CD8-positive, alpha-beta T cell (primary cell): ENCODE measurements at regions of chr6 and their contacts with region 1.

Region 1: DNA sequence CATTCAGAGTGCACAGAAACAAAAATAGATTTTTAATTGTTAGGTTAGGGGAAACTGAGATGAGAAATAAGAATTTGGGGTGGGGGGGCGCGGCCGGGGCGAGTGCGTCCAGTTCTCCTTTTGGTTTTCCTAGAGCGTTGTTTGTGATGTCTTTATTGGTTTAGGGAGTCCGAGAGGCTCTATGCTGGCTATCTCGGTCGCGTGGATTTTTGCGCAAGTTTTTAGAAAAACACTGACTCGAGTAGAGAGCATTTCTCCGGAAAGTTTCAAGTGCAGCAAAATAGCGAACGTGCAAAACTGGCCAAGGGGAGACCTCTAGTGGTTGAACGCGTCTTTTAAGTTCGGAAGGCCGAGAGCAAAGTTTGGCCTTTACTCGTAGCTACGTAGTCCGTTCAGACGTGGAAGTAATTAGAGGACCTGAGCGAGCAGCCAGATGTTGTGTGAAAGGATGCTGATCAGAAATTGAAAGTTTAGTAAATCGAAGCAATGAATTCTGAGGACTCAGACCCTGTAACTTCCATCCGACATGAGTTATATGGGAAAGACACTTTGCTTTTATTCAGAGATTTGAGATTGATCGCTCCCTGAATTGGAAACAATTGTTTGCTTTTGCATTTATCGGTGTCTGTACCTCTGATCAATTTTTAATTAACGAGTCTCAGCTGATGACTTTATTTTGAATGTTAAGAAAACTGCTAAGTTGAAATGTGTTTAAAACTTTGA is 2.7 kb downstream of the L3MBTL3 start:
- DNase-seq: peak; percentile 57 to 93 (median 78)
- ATAC-seq: peak; percentile 45
- H3K4me3 ChIP-seq: peak overlapping the region; percentile 61 to 85
- H3K4me3 Mint-ChIP-seq: peak overlapping the region; percentile 98
- H3K27ac ChIP-seq: peak overlapping the region; percentile 60 to 82
- H3K27ac Mint-ChIP-seq: peak overlapping the region; percentile 96
- H3K4me1 ChIP-seq: peaks cover 11% of the 10 kb centered on the region
- H3K4me1 Mint-ChIP-seq: peaks cover 43% of the 10 kb centered on the region
- H3K27me3 ChIP-seq: no peaks in the 10 kb centered on the region
- H3K27me3 Mint-ChIP-seq: no peaks in the 10 kb centered on the region
- CTCF ChIP-seq: peak; percentile 63

Region 2: GRCh38 chr6:129672881-129673643 is 348.0 kb before region 1 on chr6:
- CTCF ChIA-PET with region 1: no interaction called
- POLR2A ChIA-PET with region 1: interaction called, 3 read pairs
- intact Hi-C with region 1: loop called (anchors 1 to 5 kb)
- DNase-seq: peak in 3 of 9 experiments; percentile 14 to 59 (median 39)
- ATAC-seq: peak; percentile 58
- H3K4me3 ChIP-seq: no peak overlapping the region
- H3K4me3 Mint-ChIP-seq: peak overlapping the region; percentile 74
- H3K27ac ChIP-seq: peak overlapping the region in 1 of 2 experiments; percentile 59
- H3K27ac Mint-ChIP-seq: peak overlapping the region; percentile 85
- H3K4me1 ChIP-seq: peaks cover 21% of the 10 kb centered on the region
- H3K4me1 Mint-ChIP-seq: peaks cover 22% of the 10 kb centered on the region
- H3K27me3 ChIP-seq: no peaks in the 10 kb centered on the region
- H3K27me3 Mint-ChIP-seq: no peaks in the 10 kb centered on the region
- CTCF ChIP-seq: no peak

Region 3: GRCh38 chr6:129748212-129748900 is 272.7 kb before region 1 on chr6:
- CTCF ChIA-PET with region 1: interaction called, 18 read pairs
- POLR2A ChIA-PET with region 1: interaction called, 11 read pairs
- intact Hi-C with region 1: loop called in 1 of 2 experiments (anchors 2 kb)
- DNase-seq: peak in 8 of 9 experiments; percentile 25 to 85 (median 48)
- ATAC-seq: peak; percentile 84
- H3K4me3 ChIP-seq: peak overlapping the region; percentile 6 to 25
- H3K4me3 Mint-ChIP-seq: peak overlapping the region; percentile 66
- H3K27ac ChIP-seq: peak overlapping the region; percentile 49 to 87
- H3K27ac Mint-ChIP-seq: peak overlapping the region; percentile 82
- H3K4me1 ChIP-seq: peaks cover 53% of the 10 kb centered on the region
- H3K4me1 Mint-ChIP-seq: peaks cover 60% of the 10 kb centered on the region
- H3K27me3 ChIP-seq: no peaks in the 10 kb centered on the region
- H3K27me3 Mint-ChIP-seq: no peaks in the 10 kb centered on the region
- CTCF ChIP-seq: no peak

Region 4: DNA sequence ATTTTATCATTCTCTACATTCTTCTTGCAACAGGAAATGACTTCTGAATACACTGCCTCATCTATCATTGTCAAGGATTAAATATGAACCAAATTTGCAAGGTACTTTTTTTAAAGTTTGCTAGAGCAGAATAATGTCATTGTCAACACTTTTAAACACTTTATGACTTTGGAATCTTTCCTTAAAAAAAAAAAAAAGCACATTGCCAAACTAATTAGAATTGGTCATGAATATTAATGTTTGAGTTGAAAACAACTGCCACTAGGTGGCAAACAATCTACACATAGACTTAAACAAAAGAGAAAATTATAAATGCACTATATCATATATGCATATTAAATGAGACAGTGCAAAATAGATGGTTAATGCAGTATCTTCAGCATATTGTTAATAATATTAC is 127.4 kb before region 1 on chr6:
- CTCF ChIA-PET with region 1: interaction called, 7 read pairs
- POLR2A ChIA-PET with region 1: no interaction called
- intact Hi-C with region 1: loop called (anchors 1 kb)
- DNase-seq: peak in 2 of 9 experiments; percentile 39 to 58
- ATAC-seq: no peak
- H3K4me3 ChIP-seq: no peak overlapping the region
- H3K4me3 Mint-ChIP-seq: no peak overlapping the region
- H3K27ac ChIP-seq: no peak overlapping the region
- H3K27ac Mint-ChIP-seq: no peak overlapping the region
- H3K4me1 ChIP-seq: no peaks in the 10 kb centered on the region
- H3K4me1 Mint-ChIP-seq: no peaks in the 10 kb centered on the region
- H3K27me3 ChIP-seq: no peaks in the 10 kb centered on the region
- H3K27me3 Mint-ChIP-seq: no peaks in the 10 kb centered on the region
- CTCF ChIP-seq: peak; percentile 33

Region 5: DNA sequence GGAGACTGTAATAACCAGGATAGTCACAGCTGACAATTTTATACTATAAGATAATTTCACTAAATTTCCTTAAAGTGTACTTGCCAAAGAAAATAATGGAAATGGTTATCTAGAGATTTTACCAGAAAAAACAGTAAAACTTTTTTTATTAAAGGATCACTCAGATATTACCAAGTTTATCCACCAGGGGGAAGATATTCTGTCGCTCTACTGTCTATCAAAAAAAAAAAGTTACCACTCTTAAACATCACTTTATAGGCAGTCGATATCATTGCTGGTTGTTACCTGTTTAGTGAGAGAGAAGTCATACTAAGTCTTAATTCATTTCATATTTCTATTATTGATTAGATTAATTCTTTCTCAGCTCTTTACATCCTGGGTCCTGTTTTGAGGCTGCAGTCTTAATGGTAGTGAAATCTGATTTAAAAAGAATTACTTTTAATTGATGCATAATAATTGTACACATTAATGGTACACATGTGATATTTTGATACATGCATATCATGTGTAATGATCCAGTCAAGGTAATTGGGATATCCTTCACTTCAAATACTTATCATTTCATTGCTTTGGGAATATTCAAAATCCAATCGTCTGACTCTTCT is 16.2 kb after region 1 on chr6:
- CTCF ChIA-PET with region 1: interaction called, 26 read pairs
- POLR2A ChIA-PET with region 1: no interaction called
- intact Hi-C with region 1: no loop called
- DNase-seq: peak in 2 of 9 experiments; percentile 45 to 59
- ATAC-seq: peak; percentile 62
- H3K4me3 ChIP-seq: no peak overlapping the region
- H3K4me3 Mint-ChIP-seq: no peak overlapping the region
- H3K27ac ChIP-seq: no peak overlapping the region
- H3K27ac Mint-ChIP-seq: no peak overlapping the region
- H3K4me1 ChIP-seq: peaks cover 17% of the 10 kb centered on the region
- H3K4me1 Mint-ChIP-seq: peaks cover 66% of the 10 kb centered on the region
- H3K27me3 ChIP-seq: no peaks in the 10 kb centered on the region
- H3K27me3 Mint-ChIP-seq: no peaks in the 10 kb centered on the region
- CTCF ChIP-seq: peak; percentile 85